ENCODE measurements at regions of chr1 and their contacts with region 1.

Region 1: DNA sequence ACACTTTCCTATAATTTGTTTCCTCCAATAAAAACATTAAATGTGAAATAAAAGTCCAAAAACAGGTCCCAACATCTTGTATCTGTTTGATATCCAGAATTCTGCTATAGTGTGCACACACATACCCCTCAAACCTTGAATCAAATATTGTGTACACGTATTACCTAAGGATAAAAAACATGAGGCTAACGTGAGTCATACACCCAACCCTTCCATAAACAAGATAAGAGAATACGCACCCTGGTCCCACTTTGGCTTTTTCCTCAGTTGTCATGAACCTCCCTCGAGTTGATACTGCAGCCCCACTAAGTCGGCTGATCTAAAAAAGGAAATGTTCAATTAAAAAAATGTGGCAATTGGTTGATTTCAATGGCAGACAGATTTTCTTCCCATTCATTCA is 5.2 kb downstream of the KHDC4 start:
- DNase-seq: no peak
- H3K4me3 ChIP-seq: no peak overlapping the region
- H3K4me1 ChIP-seq: peaks cover 15% of the 10 kb centered on the region
- H3K27me3 ChIP-seq: no peaks in the 10 kb centered on the region

Region 2: GRCh38 chr1:155847823-155848529 is 81.1 kb before region 1 on chr1:
- in situ Hi-C with region 1: no loop called
- DNase-seq: no peak
- H3K4me3 ChIP-seq: no peak overlapping the region
- H3K4me1 ChIP-seq: peaks cover 7% of the 10 kb centered on the region; the same call in 1 of the 2 replicates
- H3K27me3 ChIP-seq: no peaks in the 10 kb centered on the region

Region 3: DNA sequence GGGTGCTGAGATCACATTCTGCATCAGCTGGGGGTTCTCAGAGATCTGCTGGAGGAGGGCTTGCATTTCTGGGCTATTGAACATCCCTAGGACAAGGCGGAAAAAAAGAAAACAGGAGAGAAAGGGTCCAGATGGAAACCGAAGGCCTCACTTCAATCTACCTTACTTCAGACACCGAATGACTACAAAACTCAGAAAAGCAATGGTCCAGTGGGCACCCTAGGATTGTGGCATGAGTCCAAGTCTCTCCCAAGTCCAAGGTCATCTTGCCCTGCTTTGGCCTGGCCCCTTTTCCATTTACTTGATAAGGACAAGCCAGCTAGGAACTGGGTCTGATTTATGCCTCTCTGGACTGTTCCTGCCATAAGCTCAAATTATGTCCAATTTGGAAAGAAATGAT is 113.8 kb after region 1 on chr1:
- in situ Hi-C with region 1: no loop called
- DNase-seq: no peak
- H3K4me3 ChIP-seq: no peak overlapping the region
- H3K4me1 ChIP-seq: no peaks in the 10 kb centered on the region
- H3K27me3 ChIP-seq: no peaks in the 10 kb centered on the region

Region 4: DNA sequence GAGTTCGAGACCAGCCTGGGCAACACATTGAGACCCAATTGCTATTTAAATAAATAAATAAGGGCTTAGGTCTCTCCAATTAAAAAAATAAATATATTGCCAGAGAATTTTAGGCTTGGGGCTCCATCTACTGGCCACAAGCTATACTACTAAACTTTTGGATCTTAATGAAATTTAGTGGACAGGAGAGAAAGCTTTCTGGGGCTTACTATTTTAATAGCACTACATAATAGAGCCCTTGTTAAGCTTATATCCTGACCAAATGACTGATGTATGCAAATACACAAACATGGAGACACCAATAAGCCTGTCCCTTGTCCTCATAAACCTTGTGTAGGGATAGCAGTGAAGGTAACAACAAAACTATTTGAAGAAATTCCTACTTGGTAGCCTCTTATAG is 390.6 kb after region 1 on chr1:
- in situ Hi-C with region 1: loop called (anchors 10 kb)
- DNase-seq: peak; percentile 20 to 33
- H3K4me3 ChIP-seq: no peak overlapping the region
- H3K4me1 ChIP-seq: no peaks in the 10 kb centered on the region
- H3K27me3 ChIP-seq: no peaks in the 10 kb centered on the region